ENCODE measurements at regions of chr11 and their contacts with region 1.

Region 1: GRCh38 chr11:57480409-57481137 is 20.2 kb downstream of the RTN4RL2 start:
- DNase-seq: peak; percentile 47
- ATAC-seq: peak; percentile 29
- H3K4me3 Mint-ChIP-seq: no peak overlapping the region
- H3K27ac Mint-ChIP-seq: no peak overlapping the region
- H3K4me1 Mint-ChIP-seq: peaks cover 59% of the 10 kb centered on the region
- H3K27me3 Mint-ChIP-seq: peaks cover 7% of the 10 kb centered on the region
- CTCF ChIP-seq: no peak

Region 2: GRCh38 chr11:57345555-57346211 is 134.9 kb before region 1 on chr11:
- CTCF ChIA-PET with region 1: interaction called, 8 read pairs
- POLR2A ChIA-PET with region 1: no interaction called
- intact Hi-C with region 1: loop called (anchors 1 kb)
- DNase-seq: peak; percentile 40
- ATAC-seq: peak; percentile 91
- H3K4me3 Mint-ChIP-seq: no peak overlapping the region
- H3K27ac Mint-ChIP-seq: no peak overlapping the region
- H3K4me1 Mint-ChIP-seq: peaks cover 3% of the 10 kb centered on the region
- H3K27me3 Mint-ChIP-seq: peaks cover 3% of the 10 kb centered on the region
- CTCF ChIP-seq: no peak

Region 3: GRCh38 chr11:57406337-57406904 is 74.2 kb before region 1 on chr11:
- CTCF ChIA-PET with region 1: no interaction called
- POLR2A ChIA-PET with region 1: interaction called, 4 read pairs
- intact Hi-C with region 1: loop called (anchors 5 kb)
- DNase-seq: no peak
- ATAC-seq: peak; percentile 80
- H3K4me3 Mint-ChIP-seq: peak overlapping the region; percentile 40
- H3K27ac Mint-ChIP-seq: peak overlapping the region; percentile 88
- H3K4me1 Mint-ChIP-seq: peaks cover 50% of the 10 kb centered on the region
- H3K27me3 Mint-ChIP-seq: no peaks in the 10 kb centered on the region
- CTCF ChIP-seq: no peak

Region 4: GRCh38 chr11:57493507-57494503 is 13.2 kb after region 1 on chr11:
- CTCF ChIA-PET with region 1: interaction called, 33 read pairs
- POLR2A ChIA-PET with region 1: interaction called, 6 read pairs
- intact Hi-C with region 1: loop called (anchors 1 kb)
- DNase-seq: peak; percentile 64
- ATAC-seq: peak; percentile 96
- H3K4me3 Mint-ChIP-seq: no peak overlapping the region
- H3K27ac Mint-ChIP-seq: peak overlapping the region; percentile 76
- H3K4me1 Mint-ChIP-seq: peaks cover 7% of the 10 kb centered on the region
- H3K27me3 Mint-ChIP-seq: no peaks in the 10 kb centered on the region
- CTCF ChIP-seq: peak; percentile 30

Region 5: GRCh38 chr11:57499413-57499982 is 18.9 kb after region 1 on chr11:
- CTCF ChIA-PET with region 1: no interaction called
- POLR2A ChIA-PET with region 1: no interaction called
- intact Hi-C with region 1: loop called (anchors 1 kb)
- DNase-seq: peak; percentile 64
- ATAC-seq: peak; percentile 100
- H3K4me3 Mint-ChIP-seq: peak overlapping the region; percentile 24
- H3K27ac Mint-ChIP-seq: no peak overlapping the region
- H3K4me1 Mint-ChIP-seq: peaks cover 6% of the 10 kb centered on the region
- H3K27me3 Mint-ChIP-seq: no peaks in the 10 kb centered on the region
- CTCF ChIP-seq: no peak

Region 6: DNA sequence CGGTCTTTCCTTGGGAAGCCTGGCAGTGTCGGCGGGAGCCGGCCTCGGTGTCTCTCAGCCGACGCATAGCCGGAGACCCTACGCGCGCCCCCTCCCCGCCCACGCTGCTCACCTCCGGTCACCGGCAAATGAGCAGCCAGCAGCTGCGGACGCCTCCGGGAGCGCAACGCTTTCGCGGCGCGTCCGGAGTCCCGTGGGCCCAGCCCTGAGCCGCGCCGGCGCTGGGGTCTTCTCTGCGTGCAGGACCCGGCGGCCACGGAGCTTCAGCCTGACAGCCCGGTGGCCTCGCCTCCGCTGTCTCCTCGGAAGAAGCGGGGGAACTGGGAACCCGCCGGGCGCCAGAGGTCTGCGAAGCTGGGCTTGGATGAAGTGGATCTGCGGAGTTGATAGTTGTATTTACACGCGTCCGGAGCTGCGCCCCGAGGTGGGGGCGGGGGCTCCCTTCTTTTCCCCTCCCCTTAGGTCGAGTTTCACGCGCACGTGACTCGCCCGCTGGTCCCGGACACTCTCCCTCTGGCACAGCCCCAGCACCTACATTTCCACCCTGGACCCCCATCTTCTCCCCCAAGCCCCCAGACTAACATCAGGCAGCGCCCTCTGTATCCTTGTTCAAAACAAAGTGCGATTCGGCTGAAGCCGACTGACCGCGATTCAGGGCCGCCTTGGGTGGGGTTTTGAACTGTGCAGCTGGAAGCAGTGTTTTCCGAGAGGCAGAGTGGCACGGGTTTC is 34.9 kb after region 1 on chr11 and contains the start of gene SLC43A1:
- CTCF ChIA-PET with region 1: interaction called, 3 read pairs
- POLR2A ChIA-PET with region 1: interaction called, 3 read pairs
- intact Hi-C with region 1: loop called (anchors 1 kb)
- DNase-seq: peak; percentile 27
- ATAC-seq: peak; percentile 29
- H3K4me3 Mint-ChIP-seq: peak within 1 kb of the TSS; percentile 97
- H3K27ac Mint-ChIP-seq: peak within 1 kb of the TSS; percentile 80
- H3K4me1 Mint-ChIP-seq: peaks cover 43% of the 10 kb centered on the region
- H3K27me3 Mint-ChIP-seq: no peaks in the 10 kb centered on the region
- CTCF ChIP-seq: no peak
- total RNA-seq, gene SLC43A1: 11.1 and 12.8 TPM in 2 replicates

Region 7: GRCh38 chr11:57638005-57638781 is 157.6 kb after region 1 on chr11:
- CTCF ChIA-PET with region 1: interaction called, 3 read pairs
- POLR2A ChIA-PET with region 1: interaction called, 11 read pairs
- intact Hi-C with region 1: no loop called
- DNase-seq: no peak
- ATAC-seq: no peak
- H3K4me3 Mint-ChIP-seq: peak overlapping the region; percentile 86
- H3K27ac Mint-ChIP-seq: no peak overlapping the region
- H3K4me1 Mint-ChIP-seq: peaks cover 27% of the 10 kb centered on the region
- H3K27me3 Mint-ChIP-seq: peaks cover 39% of the 10 kb centered on the region
- CTCF ChIP-seq: no peak